Activated CD4-positive, alpha-beta T cell treated with anti-CD3 and anti-CD28 coated beads, Interleukin-2, amount 10 ng/mL, durations not matched to agents 24 days and 14 days (primary cell): ENCODE measurements at regions of chr12 and their contacts with region 1.

Region 1: GRCh38 chr12:11486623-11487444 is 91.5 kb upstream of the PRB2 start:
- DNase-seq: peak; percentile 93
- H3K4me3 Mint-ChIP-seq: no peak overlapping the region
- H3K27ac Mint-ChIP-seq: no peak overlapping the region
- H3K4me1 Mint-ChIP-seq: peaks cover 6% of the 10 kb centered on the region
- H3K27me3 Mint-ChIP-seq: peaks cover 14% of the 10 kb centered on the region

Region 2: DNA sequence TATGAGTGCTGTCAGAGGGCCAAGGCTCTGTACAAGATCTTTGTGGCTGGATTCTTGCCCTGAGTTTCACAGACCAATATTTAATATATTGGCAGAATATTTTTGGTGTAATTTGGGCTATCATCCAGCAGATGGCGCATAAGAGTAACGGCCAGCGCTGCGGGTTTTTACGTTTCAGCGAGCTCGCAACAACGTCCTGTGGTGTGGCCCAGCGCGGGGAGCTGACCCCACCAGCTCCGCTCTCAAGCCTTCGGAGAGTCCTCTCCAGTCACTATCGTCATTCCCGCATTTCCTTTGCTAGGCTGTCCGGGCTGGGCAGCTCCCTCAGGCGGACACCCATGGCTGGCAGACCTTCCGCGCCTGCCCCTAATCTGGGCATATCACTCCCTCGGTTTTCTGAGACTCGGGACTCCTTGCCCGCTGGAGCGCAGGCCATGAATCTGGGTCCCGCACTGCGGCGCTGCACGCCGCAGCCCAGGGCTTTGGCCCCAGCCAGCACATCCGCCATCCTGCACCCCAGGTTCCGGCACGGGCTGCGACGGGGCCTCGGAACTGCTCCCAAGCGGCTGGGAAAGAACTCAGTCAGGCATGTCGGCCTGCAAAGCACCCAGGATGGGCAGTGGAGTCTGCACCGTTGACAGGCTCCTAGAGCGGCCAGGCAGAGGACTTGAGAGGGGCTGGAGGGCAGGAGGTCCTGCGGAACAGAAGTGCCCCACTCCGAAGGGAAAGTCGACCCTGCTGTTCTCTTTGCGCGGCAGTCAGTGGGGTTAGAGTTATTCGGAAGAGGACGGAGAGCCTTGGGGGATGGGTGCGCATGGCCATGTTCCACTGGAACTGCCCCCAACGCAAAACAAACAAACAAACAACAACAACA is 1333.3 kb before region 1 on chr12:
- intact Hi-C with region 1: loop called (anchors 5 kb)
- DNase-seq: peak; percentile 88
- H3K4me3 Mint-ChIP-seq: peak overlapping the region; percentile 92
- H3K27ac Mint-ChIP-seq: no peak overlapping the region
- H3K4me1 Mint-ChIP-seq: peaks cover 9% of the 10 kb centered on the region
- H3K27me3 Mint-ChIP-seq: peaks cover 47% of the 10 kb centered on the region

Region 3: DNA sequence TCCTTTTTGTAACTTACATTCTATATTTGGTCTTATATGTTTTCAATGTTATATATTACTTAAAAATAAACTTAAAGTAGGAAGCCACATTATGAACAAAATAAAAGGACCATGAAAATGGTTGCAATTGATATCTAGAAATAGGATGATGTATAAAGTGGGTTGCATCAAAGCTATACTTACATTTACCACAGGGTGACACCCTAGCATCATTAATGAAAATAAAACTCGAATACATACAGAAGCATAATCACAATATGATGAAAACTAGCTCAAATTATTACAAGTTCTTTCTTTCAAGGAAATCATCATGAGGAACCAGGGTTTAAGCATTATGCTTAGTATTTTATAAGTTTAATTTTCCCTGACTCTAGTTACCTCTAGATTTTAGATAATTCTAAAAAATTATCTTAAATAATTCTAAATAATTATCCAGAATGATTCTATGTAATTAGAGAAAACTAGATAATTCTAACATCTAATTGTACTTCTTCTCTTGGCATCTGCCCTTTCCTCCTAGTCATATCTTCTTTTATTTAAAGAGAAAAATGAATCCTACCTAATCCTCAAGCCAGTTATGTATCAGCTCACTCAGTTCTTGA is 715.6 kb before region 1 on chr12:
- intact Hi-C with region 1: loop called (anchors 1 kb)
- DNase-seq: no peak
- H3K4me3 Mint-ChIP-seq: no peak overlapping the region
- H3K27ac Mint-ChIP-seq: no peak overlapping the region
- H3K4me1 Mint-ChIP-seq: no peaks in the 10 kb centered on the region
- H3K27me3 Mint-ChIP-seq: peaks cover 56% of the 10 kb centered on the region

Region 4: GRCh38 chr12:11228296-11228879 is 258.4 kb before region 1 on chr12:
- intact Hi-C with region 1: loop called (anchors 1 kb)
- DNase-seq: peak; percentile 75
- H3K4me3 Mint-ChIP-seq: no peak overlapping the region
- H3K27ac Mint-ChIP-seq: no peak overlapping the region
- H3K4me1 Mint-ChIP-seq: no peaks in the 10 kb centered on the region
- H3K27me3 Mint-ChIP-seq: peaks cover 2% of the 10 kb centered on the region

Region 5: GRCh38 chr12:11361151-11361550 is 125.7 kb before region 1 on chr12:
- intact Hi-C with region 1: loop called (anchors 10 kb)
- DNase-seq: no peak
- H3K4me3 Mint-ChIP-seq: no peak overlapping the region
- H3K27ac Mint-ChIP-seq: no peak overlapping the region
- H3K4me1 Mint-ChIP-seq: no peaks in the 10 kb centered on the region
- H3K27me3 Mint-ChIP-seq: peaks cover 3% of the 10 kb centered on the region

Region 6: GRCh38 chr12:11553871-11554533 is 67.2 kb after region 1 on chr12:
- intact Hi-C with region 1: no loop called
- DNase-seq: peak; percentile 88
- H3K4me3 Mint-ChIP-seq: peak overlapping the region; percentile 26
- H3K27ac Mint-ChIP-seq: no peak overlapping the region
- H3K4me1 Mint-ChIP-seq: peaks cover 22% of the 10 kb centered on the region
- H3K27me3 Mint-ChIP-seq: peaks cover 18% of the 10 kb centered on the region

Region 7: DNA sequence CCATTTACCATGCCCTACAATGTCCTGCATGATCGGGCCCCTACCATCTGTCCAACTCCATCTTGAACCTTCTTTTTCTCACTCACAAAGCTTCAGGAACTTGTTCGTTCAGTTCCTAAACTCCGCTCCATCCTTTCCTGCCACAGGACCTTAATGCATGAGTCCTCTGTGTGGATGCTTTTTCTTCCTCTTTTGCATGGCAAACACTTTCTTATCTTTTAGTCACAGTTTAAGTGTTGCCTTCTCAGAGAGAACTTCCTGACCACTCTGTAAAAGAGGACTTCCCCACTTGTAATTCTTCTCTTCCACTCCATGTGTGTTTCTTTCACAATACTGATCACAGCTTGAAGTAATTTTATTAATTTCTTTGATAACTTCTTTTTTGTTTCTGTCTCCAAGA is 108.2 kb after region 1 on chr12:
- intact Hi-C with region 1: no loop called
- DNase-seq: no peak
- H3K4me3 Mint-ChIP-seq: no peak overlapping the region
- H3K27ac Mint-ChIP-seq: no peak overlapping the region
- H3K4me1 Mint-ChIP-seq: peaks cover 6% of the 10 kb centered on the region
- H3K27me3 Mint-ChIP-seq: no peaks in the 10 kb centered on the region